ENCODE measurements at regions of chr6 and their contacts with region 1.

Region 1: DNA sequence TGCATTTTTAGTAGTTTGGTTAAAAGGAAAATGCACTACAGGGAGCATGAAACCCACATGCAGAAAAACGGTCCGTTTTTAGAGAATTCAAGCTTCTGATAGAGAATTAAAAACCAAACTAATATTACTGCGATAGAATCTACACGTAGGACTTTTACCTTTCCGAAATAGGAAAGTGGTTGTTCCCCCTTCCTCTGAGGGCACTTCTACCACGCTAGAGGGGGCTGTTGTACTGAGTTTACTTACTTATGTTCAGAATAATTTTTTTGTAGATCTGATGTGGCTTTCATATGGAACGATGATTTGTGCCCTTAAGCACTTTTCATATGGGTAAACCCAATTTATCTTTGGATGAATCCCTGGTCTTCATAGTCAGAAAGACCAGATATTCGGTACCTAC is 264.3 kb upstream of the PLN start:
- DNase-seq: no peak
- ATAC-seq: peak; percentile 71 to 90 (median 78)
- H3K4me3 ChIP-seq: peak overlapping the region; percentile 35
- H3K27ac ChIP-seq: no peak overlapping the region
- H3K4me1 ChIP-seq: peaks cover 16% of the 10 kb centered on the region
- H3K27me3 ChIP-seq: no peaks in the 10 kb centered on the region
- CTCF ChIP-seq: peak; percentile 80

Region 2: GRCh38 chr6:118509009-118509617 is 225.3 kb after region 1 on chr6:
- intact Hi-C with region 1: loop called (anchors 1 to 5 kb)
- DNase-seq: no peak
- ATAC-seq: peak in 1 of 4 donors; percentile 43
- H3K4me3 ChIP-seq: peak overlapping the region; percentile 63
- H3K27ac ChIP-seq: peak overlapping the region; percentile 36
- H3K4me1 ChIP-seq: peaks cover 54% of the 10 kb centered on the region
- H3K27me3 ChIP-seq: no peaks in the 10 kb centered on the region
- CTCF ChIP-seq: peak; percentile 84

Region 3: DNA sequence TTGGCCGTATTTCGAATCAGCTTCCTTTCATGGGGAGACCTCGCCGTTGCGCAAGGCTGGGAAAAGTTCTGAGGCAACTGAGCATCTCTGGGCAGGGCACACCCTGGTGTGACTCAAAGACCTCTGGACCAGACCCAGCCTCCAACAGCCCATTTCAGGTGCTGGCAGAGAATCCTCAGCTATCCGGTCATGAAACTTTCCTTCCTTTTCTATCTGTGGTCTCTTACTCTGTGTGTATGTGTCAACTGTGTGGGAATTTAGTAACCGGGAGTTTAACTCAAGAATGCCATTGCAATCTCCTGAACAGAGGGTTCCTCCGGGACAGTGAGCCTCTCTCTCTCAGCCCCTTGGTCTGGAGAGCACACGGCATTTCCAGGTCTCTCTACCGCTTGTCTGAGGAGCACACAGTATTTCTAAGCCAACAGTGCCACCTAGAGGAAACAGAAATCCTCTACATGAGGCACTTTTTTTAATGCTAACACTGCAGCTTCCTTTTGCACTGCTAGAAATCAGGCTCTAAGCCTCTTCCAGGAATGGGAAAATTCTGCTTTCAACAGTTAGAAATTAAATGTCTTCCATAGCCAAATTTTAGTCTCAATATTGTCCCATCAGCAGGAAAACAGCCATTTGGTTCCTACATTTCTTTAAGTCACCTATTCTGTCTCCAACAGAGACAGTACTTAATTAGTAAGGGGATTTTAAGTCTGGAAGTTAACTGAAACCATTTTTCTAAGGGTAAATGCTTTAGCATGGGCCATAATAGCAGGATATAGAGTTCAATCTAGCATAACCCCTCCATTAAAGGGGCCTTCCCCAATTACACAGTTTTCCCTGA is 297.0 kb after region 1 on chr6:
- intact Hi-C with region 1: loop called in 1 of 2 experiments (anchors 2 kb)
- DNase-seq: peak; percentile 64 to 91
- ATAC-seq: peak; percentile 90 to 95 (median 92)
- H3K4me3 ChIP-seq: peak overlapping the region; percentile 9
- H3K27ac ChIP-seq: peak overlapping the region; percentile 86
- H3K4me1 ChIP-seq: peaks cover 33% of the 10 kb centered on the region
- H3K27me3 ChIP-seq: no peaks in the 10 kb centered on the region
- CTCF ChIP-seq: peak; percentile 72

Region 4: DNA sequence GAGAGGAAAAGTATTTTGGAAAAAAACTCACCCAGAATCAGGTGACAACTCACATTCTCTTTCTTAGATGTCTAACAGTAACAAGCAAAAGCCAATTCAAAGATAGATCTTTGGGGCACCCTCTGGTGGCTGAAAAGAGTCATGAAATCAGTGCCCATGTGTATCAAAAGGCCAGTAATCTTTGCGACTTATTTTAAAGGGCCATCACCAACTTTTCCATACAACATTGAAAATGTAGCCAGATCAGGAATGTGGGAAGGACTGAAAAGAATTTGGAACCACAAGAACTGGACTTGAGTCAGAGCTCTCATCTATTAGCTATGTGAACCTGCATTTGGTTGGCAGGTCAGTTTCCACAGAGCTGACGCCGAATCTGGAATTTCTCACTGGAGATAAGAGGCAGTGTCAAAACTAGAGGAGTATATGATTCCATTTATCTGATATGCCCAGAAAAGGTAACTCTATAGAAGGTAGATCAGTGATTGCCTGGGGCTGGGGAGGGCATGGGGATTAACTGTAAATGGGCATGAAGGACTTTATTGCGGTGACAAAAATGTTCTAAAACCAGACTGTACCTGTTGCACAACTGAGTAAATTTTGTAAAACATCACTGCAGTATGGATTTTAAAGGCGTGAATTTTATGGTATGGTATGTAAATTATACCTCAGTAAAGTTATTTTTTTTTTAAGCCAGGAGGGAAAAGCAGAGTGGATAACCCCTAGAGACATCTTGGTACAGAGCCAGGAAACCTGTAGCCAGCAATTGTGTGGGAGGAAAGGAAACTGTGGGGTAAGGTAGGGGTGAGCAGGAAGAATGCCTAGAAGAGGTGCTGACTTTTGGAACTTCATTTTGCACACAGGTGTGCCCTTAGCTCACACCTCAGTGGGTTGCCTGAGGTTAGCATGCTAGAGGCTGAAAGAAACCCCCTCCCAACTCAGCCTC is 493.1 kb after region 1 on chr6:
- intact Hi-C with region 1: loop called (anchors 10 kb)
- DNase-seq: peak; percentile 33 to 62
- ATAC-seq: peak; percentile 85 to 97 (median 87)
- H3K4me3 ChIP-seq: peak overlapping the region; percentile 51
- H3K27ac ChIP-seq: no peak overlapping the region
- H3K4me1 ChIP-seq: peaks cover 13% of the 10 kb centered on the region
- H3K27me3 ChIP-seq: no peaks in the 10 kb centered on the region
- CTCF ChIP-seq: peak; percentile 84

Region 5: DNA sequence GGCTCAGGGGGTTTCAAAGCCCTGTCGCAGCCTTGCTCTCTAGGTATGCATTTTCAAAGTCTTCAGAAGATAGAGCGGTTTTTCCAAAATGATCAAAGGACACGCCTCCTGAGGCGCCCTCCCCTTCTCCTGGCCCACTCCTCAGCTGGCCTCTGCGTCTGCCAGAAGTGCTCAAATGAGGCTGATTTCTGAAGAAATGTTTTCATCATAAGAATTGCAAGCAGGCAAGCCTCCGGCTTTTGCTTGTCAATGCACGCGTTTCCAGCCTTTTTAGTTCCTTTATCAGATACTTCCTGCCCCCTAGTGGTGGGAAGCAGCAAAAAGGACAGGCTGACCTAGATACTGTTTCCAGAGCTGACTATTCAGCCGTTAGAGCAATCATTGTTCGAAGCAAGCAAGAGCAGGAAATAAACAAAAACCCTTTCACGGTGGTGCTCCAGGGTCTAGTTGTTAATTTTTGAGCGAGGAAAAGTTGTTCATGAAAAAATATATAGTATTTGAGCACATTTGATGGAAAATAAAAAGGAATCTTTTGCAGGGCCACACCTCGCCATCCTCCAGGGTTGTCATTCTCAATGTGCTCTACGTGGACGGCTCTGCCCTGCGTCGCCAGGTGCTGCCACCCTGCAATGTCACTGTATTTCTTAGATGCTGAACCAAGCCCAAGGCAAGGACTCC is 516.8 kb after region 1 on chr6:
- intact Hi-C with region 1: loop called in 1 of 2 experiments (anchors 5 kb)
- DNase-seq: peak; percentile 62 to 74
- ATAC-seq: peak; percentile 82 to 97 (median 90)
- H3K4me3 ChIP-seq: peak overlapping the region; percentile 37
- H3K27ac ChIP-seq: no peak overlapping the region
- H3K4me1 ChIP-seq: peaks cover 10% of the 10 kb centered on the region
- H3K27me3 ChIP-seq: no peaks in the 10 kb centered on the region
- CTCF ChIP-seq: peak; percentile 87

Measured in psoas muscle (tissue), 8 donors.